ENCODE measurements at regions of chr1 and their contacts with region 1.

Region 1: DNA sequence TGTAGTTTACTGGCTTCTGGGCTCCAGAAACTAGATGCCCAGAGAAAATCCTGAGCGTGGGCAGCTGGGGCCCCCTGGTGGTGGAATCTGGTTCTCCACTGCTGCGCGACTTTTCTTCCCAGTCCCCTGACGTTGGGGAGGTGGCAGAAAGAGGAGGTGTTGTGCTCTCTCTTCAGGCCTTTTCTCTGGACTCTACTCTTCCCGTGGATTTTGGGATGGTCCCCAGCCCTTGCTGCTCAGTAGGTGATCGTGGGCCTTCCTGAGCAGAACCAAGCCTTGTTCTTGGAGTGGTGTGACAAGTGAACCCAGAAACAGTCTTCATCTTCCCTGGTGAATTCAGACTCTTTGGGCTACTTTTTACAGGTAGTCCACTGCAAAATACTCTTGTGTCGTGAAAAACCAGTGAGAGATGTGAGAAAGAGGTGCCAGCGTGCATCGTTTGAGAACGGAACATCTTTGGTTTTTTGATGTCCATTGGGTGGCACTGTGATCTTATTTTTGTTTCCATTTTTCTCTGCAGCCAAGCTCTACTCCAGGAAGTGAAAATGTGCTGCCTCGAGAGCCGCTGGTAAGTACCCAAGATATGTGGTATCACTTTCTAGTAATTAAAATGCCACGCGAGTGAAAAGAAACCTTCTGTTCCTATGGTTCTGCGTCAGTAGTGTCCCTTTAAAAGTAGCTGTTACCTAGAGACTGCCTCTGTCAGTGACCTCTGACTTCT is 20.2 kb downstream of the PEX14 start:
- DNase-seq: peak; percentile 77
- H3K4me3 ChIP-seq: peak overlapping the region; percentile 46
- H3K27ac ChIP-seq: peak overlapping the region; percentile 34
- H3K4me1 ChIP-seq: peaks cover 13% of the 10 kb centered on the region
- CTCF ChIP-seq: peak; percentile 97

Region 2: DNA sequence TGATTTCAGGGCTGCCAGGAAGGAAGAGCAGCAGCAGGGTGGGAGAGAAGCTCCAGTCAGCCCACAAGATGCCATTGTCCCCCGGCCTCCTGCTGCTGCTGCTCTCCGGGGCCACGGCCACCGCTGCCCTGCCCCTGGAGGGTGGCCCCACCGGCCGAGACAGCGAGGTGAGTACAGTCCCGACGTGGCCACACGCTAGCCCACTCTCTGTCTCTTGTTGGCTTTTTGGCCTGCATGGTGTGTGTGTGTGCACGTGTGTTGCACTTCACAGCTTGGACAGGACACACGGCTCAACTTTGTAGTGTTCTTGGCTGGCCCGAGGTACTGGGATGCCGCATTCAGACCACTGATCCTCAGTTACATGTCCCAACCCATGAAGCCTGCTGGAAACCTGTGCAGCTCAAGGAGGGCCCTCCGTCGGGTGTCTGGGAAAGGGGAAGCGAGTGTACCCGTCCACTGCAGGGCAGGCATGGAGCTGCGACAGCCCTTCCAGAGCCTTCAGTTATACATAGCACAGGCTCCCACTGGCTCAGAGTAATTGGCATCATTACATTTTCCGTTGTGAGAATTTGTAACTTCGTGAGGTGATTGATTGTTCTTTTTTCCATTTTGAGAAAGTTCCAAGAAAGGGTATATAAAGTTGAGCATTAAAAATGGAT is 44.6 kb before region 1 on chr1:
- CTCF ChIA-PET with region 1: no interaction called
- POLR2A ChIA-PET with region 1: no interaction called
- intact Hi-C with region 1: no loop called
- DNase-seq: no peak
- H3K4me3 ChIP-seq: no peak overlapping the region
- H3K27ac ChIP-seq: no peak overlapping the region
- H3K4me1 ChIP-seq: no peaks in the 10 kb centered on the region
- CTCF ChIP-seq: no peak

Region 3: DNA sequence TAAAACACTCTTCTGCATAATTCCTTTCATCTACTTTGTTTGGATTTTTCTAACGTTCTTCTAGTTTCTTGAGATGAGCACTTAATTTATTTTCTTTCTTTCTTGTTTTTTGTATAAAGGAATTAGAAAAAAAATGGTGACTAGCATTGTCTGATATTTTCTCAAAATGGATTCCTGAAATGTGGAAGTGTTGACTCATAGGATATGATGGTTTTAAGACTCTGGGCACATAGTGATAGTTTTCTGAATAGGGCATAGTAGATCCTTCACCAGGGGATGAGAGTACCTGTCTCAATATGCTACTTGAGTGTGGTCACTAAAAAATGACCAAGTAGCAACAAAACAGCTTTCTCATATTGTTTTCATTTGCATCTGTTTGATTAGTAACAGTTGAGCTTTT is 80.7 kb after region 1 on chr1:
- CTCF ChIA-PET with region 1: no interaction called
- POLR2A ChIA-PET with region 1: no interaction called
- intact Hi-C with region 1: no loop called
- DNase-seq: no peak
- H3K4me3 ChIP-seq: no peak overlapping the region
- H3K27ac ChIP-seq: no peak overlapping the region
- H3K4me1 ChIP-seq: no peaks in the 10 kb centered on the region
- CTCF ChIP-seq: no peak

Region 4: DNA sequence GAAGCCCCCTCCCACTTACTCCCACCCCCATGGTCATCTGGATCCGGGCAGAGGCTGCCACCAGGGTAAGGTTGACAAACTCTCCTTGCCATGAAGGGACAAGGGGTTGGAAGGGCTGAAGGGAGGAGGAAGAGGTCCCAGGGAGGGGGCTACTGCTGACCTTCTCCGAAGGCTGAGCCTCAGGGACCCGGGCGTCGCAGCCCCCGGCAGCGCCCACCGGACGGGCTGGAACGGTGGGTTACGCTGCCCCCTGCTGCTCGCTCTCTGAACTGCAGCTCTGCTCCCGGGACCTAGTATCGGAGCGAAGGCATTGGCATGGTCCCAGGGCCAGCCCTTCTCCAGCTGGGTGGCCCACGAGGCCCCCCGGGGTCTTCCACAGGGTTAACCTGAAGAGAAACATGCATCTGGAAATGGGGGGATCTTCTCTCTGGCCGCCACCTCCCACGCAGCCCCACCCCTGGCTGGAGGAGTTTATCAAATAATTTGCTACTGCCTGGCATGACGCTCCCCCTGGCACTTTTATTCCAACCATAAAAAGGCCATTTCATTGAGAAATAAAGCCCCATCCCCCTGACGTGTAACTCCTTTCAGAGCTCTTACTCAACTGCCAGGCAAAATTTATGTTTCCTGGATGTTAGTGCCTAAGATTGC is 447.1 kb after region 1 on chr1:
- CTCF ChIA-PET with region 1: no interaction called
- POLR2A ChIA-PET with region 1: interaction called, 3 read pairs
- intact Hi-C with region 1: loop called (anchors 2 kb)
- DNase-seq: peak; percentile 52
- H3K4me3 ChIP-seq: no peak overlapping the region
- H3K27ac ChIP-seq: no peak overlapping the region
- H3K4me1 ChIP-seq: peaks cover 47% of the 10 kb centered on the region
- CTCF ChIP-seq: peak; percentile 93

Region 5: DNA sequence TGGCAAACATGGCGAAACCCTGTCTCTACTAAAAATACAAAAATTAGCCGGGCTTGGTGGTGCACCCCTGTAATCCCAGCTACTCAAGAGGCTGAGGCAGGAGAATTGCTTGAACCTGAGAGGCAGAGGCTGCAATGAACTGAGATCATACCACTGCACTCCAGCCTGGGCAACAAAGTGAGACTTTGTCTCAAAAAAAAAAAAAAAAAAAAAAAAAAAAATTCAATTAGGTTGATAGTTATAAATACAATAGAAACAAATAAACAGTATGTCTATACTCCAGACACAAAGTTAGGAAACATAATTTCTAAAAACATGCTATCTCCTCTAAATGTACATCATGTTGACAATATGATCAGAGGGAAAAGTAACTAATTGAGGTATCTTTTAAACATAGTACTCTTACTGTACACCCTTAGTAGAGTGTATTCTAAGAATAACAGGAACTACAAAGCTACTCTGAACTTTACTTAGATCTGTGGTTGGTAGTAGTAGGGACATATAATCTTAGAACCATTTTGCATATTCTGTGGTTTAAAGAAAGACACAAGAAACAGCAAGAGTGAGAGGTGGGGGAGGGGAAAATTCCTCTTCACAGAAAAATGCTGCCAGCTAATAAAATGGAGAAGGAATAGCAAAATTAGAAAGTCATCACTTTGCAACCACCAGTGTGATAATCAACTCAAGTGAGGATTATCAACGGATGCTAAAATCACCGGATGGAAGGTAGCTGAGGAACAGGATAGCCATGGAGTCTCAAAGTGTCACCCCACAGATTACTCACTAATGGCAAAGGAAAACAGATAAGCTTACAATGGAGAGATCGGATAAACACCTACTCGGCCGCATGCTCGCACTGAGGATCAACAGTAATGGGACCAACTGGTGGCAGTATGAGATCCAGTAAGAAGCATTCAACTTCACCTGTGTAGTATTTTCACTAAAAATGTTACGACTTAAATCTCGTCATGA is 732.5 kb after region 1 on chr1:
- CTCF ChIA-PET with region 1: no interaction called
- POLR2A ChIA-PET with region 1: no interaction called
- intact Hi-C with region 1: no loop called
- DNase-seq: peak; percentile 73
- H3K4me3 ChIP-seq: peak overlapping the region; percentile 33
- H3K27ac ChIP-seq: peak overlapping the region; percentile 86
- H3K4me1 ChIP-seq: peaks cover 51% of the 10 kb centered on the region
- CTCF ChIP-seq: no peak